ENCODE measurements at regions of chr11 and their contacts with region 1.

Region 1: GRCh38 chr11:3947061-3947460 is 91.6 kb downstream of the STIM1 start:
- DNase-seq: no peak
- ATAC-seq: peak; percentile 92

Region 2: DNA sequence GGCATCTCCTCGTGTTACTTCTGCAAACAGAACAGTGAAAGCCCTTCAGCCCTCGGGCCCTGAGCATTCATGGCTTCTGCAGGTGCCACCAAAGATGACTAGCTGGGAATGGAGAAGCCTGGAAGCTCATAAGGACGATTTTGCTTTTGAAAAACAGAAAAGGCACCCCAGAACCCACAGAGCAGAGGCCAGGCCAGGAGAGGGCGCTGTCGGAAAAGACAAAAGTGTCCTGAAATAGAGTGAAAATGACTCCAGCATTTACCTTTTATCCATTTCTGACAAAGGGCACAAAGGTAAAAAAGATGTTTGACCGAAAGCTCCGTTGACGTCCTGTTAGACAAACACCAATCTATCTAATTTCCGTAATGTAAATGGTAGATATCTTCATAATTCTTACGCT is 605.8 kb before region 1 on chr11:
- intact Hi-C with region 1: no loop called
- DNase-seq: peak; percentile 55
- ATAC-seq: no peak

Region 3: DNA sequence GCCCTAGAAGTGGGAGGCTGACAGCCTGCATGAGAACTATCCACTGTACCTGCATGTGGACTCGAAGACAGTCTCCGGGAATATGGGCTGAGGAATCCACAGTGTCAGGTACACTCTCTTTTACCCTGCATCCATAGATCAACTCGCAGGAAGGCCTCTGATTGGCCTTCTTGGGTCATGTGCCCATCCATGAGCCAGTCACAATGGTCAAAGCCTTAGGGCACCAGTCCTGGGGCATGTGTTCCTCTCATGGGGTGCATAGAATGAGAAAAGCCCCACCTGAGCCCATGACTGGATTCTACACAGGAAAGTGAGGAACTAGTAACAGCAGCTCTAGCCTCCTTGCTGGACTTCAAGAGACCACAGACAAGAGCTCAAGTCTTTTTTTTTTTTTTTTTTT is 291.5 kb before region 1 on chr11:
- intact Hi-C with region 1: no loop called
- DNase-seq: no peak
- ATAC-seq: no peak

Region 4: GRCh38 chr11:3867209-3868091 is 79.6 kb before region 1 on chr11:
- intact Hi-C with region 1: loop called (anchors 10 kb)
- DNase-seq: peak; percentile 40
- ATAC-seq: peak; percentile 95

Region 5: DNA sequence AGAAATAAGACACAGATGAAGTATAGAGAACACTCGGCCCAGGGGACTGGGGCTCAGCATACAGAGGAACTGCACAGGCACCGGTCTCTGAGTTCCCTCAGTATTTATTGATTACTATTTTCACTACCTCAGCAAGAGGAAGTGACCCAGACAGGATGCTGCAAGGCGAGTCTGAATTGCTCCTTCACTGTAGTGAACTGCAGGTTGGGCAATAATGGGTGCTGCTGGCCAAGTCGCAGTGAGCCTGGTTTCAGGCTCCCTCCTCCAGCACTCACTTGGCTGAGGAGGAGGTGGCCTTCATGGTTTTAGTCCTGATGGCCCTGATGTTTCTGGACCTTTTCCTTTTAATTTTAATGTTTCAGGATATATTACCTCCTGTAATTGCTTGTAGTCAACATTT is 512.4 kb after region 1 on chr11:
- intact Hi-C with region 1: no loop called
- DNase-seq: no peak
- ATAC-seq: peak; percentile 49